Left ventricle myocardium inferior (tissue), 1 donor: ENCODE measurements at regions of chr14 and their contacts with region 1.

Region 1: GRCh38 chr14:60561845-60562746 is 53.1 kb downstream of the SIX6 start:
- DNase-seq: no peak
- H3K4me3 ChIP-seq: no peak overlapping the region
- H3K27ac ChIP-seq: no peak overlapping the region
- H3K4me1 ChIP-seq: no peaks in the 10 kb centered on the region
- H3K27me3 ChIP-seq: peaks cover 7% of the 10 kb centered on the region
- CTCF ChIP-seq: peak; percentile 69

Region 2: GRCh38 chr14:60349663-60350365 is 212.3 kb before region 1 on chr14:
- intact Hi-C with region 1: loop called (anchors 5 kb)
- DNase-seq: no peak
- H3K4me3 ChIP-seq: peak overlapping the region; percentile 14
- H3K27ac ChIP-seq: no peak overlapping the region
- H3K4me1 ChIP-seq: peaks cover 8% of the 10 kb centered on the region
- H3K27me3 ChIP-seq: no peaks in the 10 kb centered on the region
- CTCF ChIP-seq: peak; percentile 75